ENCODE measurements at regions of chr11 and their contacts with region 1.

Region 1: GRCh38 chr11:13486926-13487660 is 8.7 kb downstream of the PTH start:
- DNase-seq: peak in 1 of 2 experiments; percentile 91
- H3K4me3 ChIP-seq: peak overlapping the region; percentile 35 to 57 (median 42); a peak in 7 of 8 replicates
- H3K27ac ChIP-seq: no peak overlapping the region
- H3K4me1 ChIP-seq: no peaks in the 10 kb centered on the region
- H3K27me3 ChIP-seq: no peaks in the 10 kb centered on the region
- CTCF ChIP-seq: peak; percentile 73 to 84 (median 82)
- EP300 ChIP-seq: no peak
- POLR2A ChIP-seq: no peak
- RAD21 ChIP-seq: peak; percentile 72 to 73

Region 2: GRCh38 chr11:13160346-13160745 is 326.7 kb before region 1 on chr11:
- CTCF ChIA-PET with region 1: no interaction called
- POLR2A ChIA-PET with region 1: no interaction called
- DNase-seq: no peak
- H3K4me3 ChIP-seq: no peak overlapping the region
- H3K27ac ChIP-seq: no peak overlapping the region
- H3K4me1 ChIP-seq: peaks cover 0 to 8% (median 2%) of the 10 kb centered on the region in 4 experiments; a peak in 3 of 7 replicates
- H3K27me3 ChIP-seq: no peaks in the 10 kb centered on the region
- CTCF ChIP-seq: no peak
- EP300 ChIP-seq: no peak
- POLR2A ChIP-seq: no peak
- RAD21 ChIP-seq: no peak

Region 3: DNA sequence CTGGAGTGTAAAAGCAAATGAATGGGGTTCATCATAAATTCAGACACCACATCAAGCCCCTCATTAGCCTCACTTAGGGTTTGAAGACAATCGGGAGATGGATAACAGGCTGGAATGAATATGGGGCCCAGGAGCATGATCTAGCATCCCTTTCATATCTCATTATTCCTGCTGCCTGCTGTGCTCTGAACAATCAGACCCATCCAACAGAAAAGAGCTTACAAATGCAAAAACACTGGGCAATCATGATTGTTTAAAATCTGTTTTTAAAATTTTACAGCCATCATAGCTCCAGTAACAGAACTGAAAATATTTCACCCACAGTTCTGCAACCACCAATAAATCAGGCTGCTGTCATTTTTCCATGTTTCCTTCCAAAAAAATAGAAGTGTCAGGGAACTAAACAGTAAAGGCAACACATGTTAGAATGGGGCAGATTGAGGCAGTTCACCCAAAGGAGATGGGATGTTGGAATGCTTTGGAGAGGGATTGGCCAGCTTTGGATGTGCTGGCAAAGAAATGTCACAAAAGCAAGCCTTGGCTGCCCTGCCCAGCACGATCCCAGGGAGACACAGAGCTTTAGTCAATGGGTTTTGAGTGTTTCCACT is 257.3 kb before region 1 on chr11:
- CTCF ChIA-PET with region 1: no interaction called
- POLR2A ChIA-PET with region 1: no interaction called
- DNase-seq: no peak
- H3K4me3 ChIP-seq: no peak overlapping the region
- H3K27ac ChIP-seq: no peak overlapping the region
- H3K4me1 ChIP-seq: no peaks in the 10 kb centered on the region
- H3K27me3 ChIP-seq: no peaks in the 10 kb centered on the region
- CTCF ChIP-seq: no peak
- EP300 ChIP-seq: no peak
- POLR2A ChIP-seq: no peak
- RAD21 ChIP-seq: no peak

Region 4: GRCh38 chr11:13465909-13466371 is 21.2 kb before region 1 on chr11:
- CTCF ChIA-PET with region 1: interaction called, 41 read pairs
- POLR2A ChIA-PET with region 1: no interaction called
- DNase-seq: no peak
- H3K4me3 ChIP-seq: no peak overlapping the region
- H3K27ac ChIP-seq: no peak overlapping the region
- H3K4me1 ChIP-seq: no peaks in the 10 kb centered on the region; a peak in 1 of 7 replicates
- H3K27me3 ChIP-seq: no peaks in the 10 kb centered on the region
- CTCF ChIP-seq: peak in 2 of 3 experiments; percentile 12 to 22; a peak in 2 of 4 replicates
- EP300 ChIP-seq: no peak
- POLR2A ChIP-seq: no peak
- RAD21 ChIP-seq: peak; percentile 20; a peak in 3 of 4 replicates

Region 5: GRCh38 chr11:13472001-13472400 is 15.1 kb before region 1 on chr11:
- CTCF ChIA-PET with region 1: interaction called, 41 read pairs
- POLR2A ChIA-PET with region 1: no interaction called
- DNase-seq: no peak
- H3K4me3 ChIP-seq: no peak overlapping the region
- H3K27ac ChIP-seq: no peak overlapping the region
- H3K4me1 ChIP-seq: peaks cover 0 to 9% (median 4%) of the 10 kb centered on the region in 4 experiments; a peak in 3 of 7 replicates
- H3K27me3 ChIP-seq: no peaks in the 10 kb centered on the region
- CTCF ChIP-seq: no peak
- EP300 ChIP-seq: no peak
- POLR2A ChIP-seq: no peak
- RAD21 ChIP-seq: no peak

Region 6: DNA sequence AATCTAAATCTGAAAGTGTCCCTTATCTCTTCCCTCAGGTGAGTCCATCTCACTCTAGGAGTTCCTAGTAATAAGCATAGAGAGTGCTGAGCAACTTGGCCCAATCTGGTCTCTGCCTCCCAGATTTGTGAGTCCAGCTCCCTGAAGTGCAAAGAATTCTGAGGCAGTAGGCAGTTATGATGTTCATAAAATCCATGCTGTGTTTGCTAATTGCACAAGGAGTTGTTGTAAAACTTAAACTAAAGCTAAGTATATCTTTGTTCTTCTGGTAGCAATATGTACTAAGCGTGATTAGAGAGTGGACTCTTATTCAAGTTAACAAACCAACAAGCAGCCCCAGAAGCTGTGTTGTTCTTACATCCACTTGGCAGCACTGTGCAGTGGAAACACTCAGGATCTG is 16.3 kb after region 1 on chr11:
- CTCF ChIA-PET with region 1: interaction called, 33 read pairs
- POLR2A ChIA-PET with region 1: no interaction called
- DNase-seq: no peak
- H3K4me3 ChIP-seq: no peak overlapping the region
- H3K27ac ChIP-seq: no peak overlapping the region
- H3K4me1 ChIP-seq: no peaks in the 10 kb centered on the region
- H3K27me3 ChIP-seq: no peaks in the 10 kb centered on the region
- CTCF ChIP-seq: no peak
- EP300 ChIP-seq: no peak
- POLR2A ChIP-seq: no peak
- RAD21 ChIP-seq: no peak

Region 7: GRCh38 chr11:13535819-13536218 is 48.7 kb after region 1 on chr11:
- CTCF ChIA-PET with region 1: interaction called, 26 read pairs
- POLR2A ChIA-PET with region 1: no interaction called
- DNase-seq: peak in 1 of 2 experiments; percentile 5
- H3K4me3 ChIP-seq: no peak overlapping the region
- H3K27ac ChIP-seq: no peak overlapping the region
- H3K4me1 ChIP-seq: no peaks in the 10 kb centered on the region
- H3K27me3 ChIP-seq: no peaks in the 10 kb centered on the region
- CTCF ChIP-seq: peak in 2 of 3 experiments; percentile 53 to 64; a peak in 3 of 4 replicates
- EP300 ChIP-seq: no peak
- POLR2A ChIP-seq: no peak
- RAD21 ChIP-seq: peak; percentile 63 to 77; a peak in 3 of 4 replicates